ENCODE measurements at regions of chrX and their contacts with region 1.

Region 1: GRCh38 chrX:65985922-65986588 is 53.8 kb downstream of the VSIG4 start:
- DNase-seq: peak; percentile 67
- H3K4me3 ChIP-seq: no peak overlapping the region
- H3K27ac ChIP-seq: no peak overlapping the region
- H3K4me1 ChIP-seq: peaks cover 6% of the 10 kb centered on the region
- CTCF ChIP-seq: peak; percentile 76

Region 2: GRCh38 chrX:65745992-65746391 is 240.1 kb before region 1 on chrX:
- CTCF ChIA-PET with region 1: no interaction called
- POLR2A ChIA-PET with region 1: no interaction called
- intact Hi-C with region 1: loop called (anchors 5 kb)
- DNase-seq: no peak
- H3K4me3 ChIP-seq: no peak overlapping the region
- H3K27ac ChIP-seq: no peak overlapping the region
- H3K4me1 ChIP-seq: no peaks in the 10 kb centered on the region
- CTCF ChIP-seq: peak; percentile 48; the same call in 1 of the 2 replicates

Region 3: GRCh38 chrX:66110112-66110511 is 124.1 kb after region 1 on chrX:
- CTCF ChIA-PET with region 1: no interaction called
- POLR2A ChIA-PET with region 1: no interaction called
- intact Hi-C with region 1: loop called (anchors 10 kb)
- DNase-seq: peak; percentile 62
- H3K4me3 ChIP-seq: no peak overlapping the region
- H3K27ac ChIP-seq: no peak overlapping the region
- H3K4me1 ChIP-seq: no peaks in the 10 kb centered on the region
- CTCF ChIP-seq: peak; percentile 83

Measured in OCI-LY7 (cell line).